CD8-positive, alpha-beta T cell (primary cell): ENCODE measurements at regions of chr7 and their contacts with region 1.

Region 1: DNA sequence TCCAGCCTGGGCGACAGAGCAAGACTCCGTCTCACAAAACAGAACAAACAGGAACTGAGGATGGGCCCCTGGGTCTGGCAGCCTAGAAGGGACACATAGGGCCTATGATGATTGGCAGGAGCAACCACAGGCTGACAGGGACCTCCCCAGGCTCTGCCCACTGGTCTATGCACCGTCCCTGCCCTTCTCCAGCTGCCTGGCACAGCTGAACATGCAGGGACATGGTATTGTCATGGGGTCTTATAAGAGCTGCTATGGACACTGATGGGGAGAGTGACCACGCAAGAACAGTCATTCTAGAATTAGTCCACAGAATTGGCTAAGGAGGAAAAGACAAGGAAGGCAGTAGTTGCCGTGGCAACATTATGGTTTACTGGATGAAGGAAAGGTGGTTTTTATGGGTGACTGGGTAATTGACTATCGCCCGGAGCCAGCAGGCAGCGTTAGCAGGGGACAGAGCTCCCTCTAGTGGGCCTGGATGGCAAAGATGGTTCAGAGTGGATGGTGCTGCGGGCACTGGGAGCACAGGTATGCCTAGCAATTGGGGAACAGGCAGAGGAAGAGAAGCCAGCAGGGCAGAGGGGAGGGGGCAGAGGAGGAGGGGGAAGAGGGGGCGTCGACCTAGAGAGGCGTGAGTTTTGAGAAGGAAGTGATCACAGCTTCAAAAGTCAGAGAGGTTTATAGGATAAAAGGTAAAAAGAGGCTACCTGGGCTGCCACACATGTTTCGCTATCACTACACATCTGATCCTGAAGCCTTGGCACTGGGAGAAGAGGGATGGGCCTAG is 7.8 kb upstream of the TRIM56 start:
- DNase-seq: peak; percentile 75 to 86 (median 83)
- ATAC-seq: peak; percentile 98
- H3K4me3 ChIP-seq: no peak overlapping the region
- H3K4me3 Mint-ChIP-seq: no peak overlapping the region
- H3K27ac ChIP-seq: no peak overlapping the region
- H3K27ac Mint-ChIP-seq: no peak overlapping the region
- H3K4me1 ChIP-seq: no peaks in the 10 kb centered on the region
- H3K4me1 Mint-ChIP-seq: peaks cover 8% of the 10 kb centered on the region
- H3K27me3 ChIP-seq: no peaks in the 10 kb centered on the region
- H3K27me3 Mint-ChIP-seq: peaks cover 5% of the 10 kb centered on the region
- CTCF ChIP-seq: peak; percentile 80

Region 2: DNA sequence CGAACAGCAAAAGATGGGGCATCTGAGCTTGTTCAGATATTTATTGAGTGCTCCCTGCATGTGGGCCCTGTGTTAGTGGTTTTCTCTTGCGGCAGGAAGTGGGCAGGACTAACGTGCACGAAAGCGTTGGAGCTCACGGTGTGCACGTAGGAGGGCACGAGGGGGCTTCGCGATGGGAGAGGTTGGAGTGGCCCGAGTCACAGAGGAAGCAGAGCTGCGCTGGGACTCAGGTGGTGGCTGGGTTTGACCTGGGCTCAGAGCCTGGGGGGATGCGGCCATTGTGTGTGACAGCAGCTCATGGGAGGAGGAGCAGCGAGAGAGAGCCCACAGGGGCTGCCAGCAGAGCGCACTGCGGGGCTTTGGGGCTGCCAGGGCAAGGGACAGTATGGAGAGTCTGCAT is 1453.0 kb before region 1 on chr7:
- CTCF ChIA-PET with region 1: no interaction called
- POLR2A ChIA-PET with region 1: no interaction called
- intact Hi-C with region 1: loop called in 1 of 2 experiments (anchors 5 kb)
- DNase-seq: peak; percentile 57 to 96 (median 78)
- ATAC-seq: peak; percentile 92
- H3K4me3 ChIP-seq: peak overlapping the region; percentile 33 to 51
- H3K4me3 Mint-ChIP-seq: peak overlapping the region; percentile 90
- H3K27ac ChIP-seq: peak overlapping the region; percentile 71 to 87
- H3K27ac Mint-ChIP-seq: peak overlapping the region; percentile 99
- H3K4me1 ChIP-seq: peaks cover 36% of the 10 kb centered on the region
- H3K4me1 Mint-ChIP-seq: peaks cover 60% of the 10 kb centered on the region
- H3K27me3 ChIP-seq: no peaks in the 10 kb centered on the region
- H3K27me3 Mint-ChIP-seq: no peaks in the 10 kb centered on the region
- CTCF ChIP-seq: no peak

Region 3: GRCh38 chr7:100896732-100897608 is 180.5 kb before region 1 on chr7:
- CTCF ChIA-PET with region 1: interaction called, 8 read pairs
- POLR2A ChIA-PET with region 1: no interaction called
- intact Hi-C with region 1: loop called (anchors 1 to 2 kb)
- DNase-seq: peak in 7 of 9 experiments; percentile 54 to 71 (median 58)
- ATAC-seq: peak; percentile 57
- H3K4me3 ChIP-seq: no peak overlapping the region
- H3K4me3 Mint-ChIP-seq: peak overlapping the region; percentile 78
- H3K27ac ChIP-seq: no peak overlapping the region
- H3K27ac Mint-ChIP-seq: no peak overlapping the region
- H3K4me1 ChIP-seq: peaks cover 8% of the 10 kb centered on the region
- H3K4me1 Mint-ChIP-seq: peaks cover 8% of the 10 kb centered on the region
- H3K27me3 ChIP-seq: peaks cover 8 to 30% of the 10 kb centered on the region in 2 experiments
- H3K27me3 Mint-ChIP-seq: peaks cover 36% of the 10 kb centered on the region
- CTCF ChIP-seq: peak; percentile 68

Region 4: DNA sequence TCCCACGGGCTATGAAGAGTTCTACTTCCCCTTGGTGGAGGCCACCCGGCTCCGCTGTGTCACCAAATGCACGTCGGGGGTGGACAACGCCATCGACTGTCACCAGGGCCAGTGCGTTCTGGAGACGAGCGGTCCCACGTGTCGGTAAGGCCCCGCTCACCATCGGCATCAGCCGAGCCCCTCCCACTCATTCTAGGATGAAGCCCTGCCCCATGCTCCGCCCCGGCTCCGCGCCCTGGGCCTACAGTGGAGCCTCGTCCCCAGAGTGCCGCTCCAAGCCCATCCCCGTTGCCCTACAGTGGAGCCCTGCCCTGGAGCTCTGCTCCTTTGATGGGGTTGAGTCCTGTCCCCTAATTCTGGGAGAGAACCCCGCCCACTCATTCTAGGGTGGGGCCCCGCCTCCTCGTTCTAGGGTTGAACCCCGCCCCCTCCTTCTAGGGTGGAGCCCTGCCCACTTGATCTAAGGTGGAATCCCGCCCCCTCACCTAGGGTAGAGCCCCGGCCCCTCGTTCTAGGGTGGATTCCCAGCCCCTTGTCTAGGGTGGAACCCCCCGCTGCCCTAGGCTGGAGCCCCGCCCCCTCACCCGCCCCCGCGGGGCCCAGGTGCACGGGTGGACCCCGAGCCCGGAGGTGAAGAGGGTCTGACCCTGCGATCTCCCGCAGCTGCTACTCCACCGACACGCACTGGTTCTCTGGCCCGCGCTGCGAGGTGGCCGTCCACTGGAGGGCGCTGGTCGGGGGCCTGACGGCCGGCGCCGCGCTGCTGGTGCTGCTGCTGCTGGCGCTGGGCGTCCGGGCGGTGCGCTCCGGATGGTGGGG is 111.6 kb before region 1 on chr7:
- CTCF ChIA-PET with region 1: interaction called, 3 read pairs
- POLR2A ChIA-PET with region 1: no interaction called
- intact Hi-C with region 1: loop called (anchors 5 kb)
- DNase-seq: peak; percentile 57 to 84 (median 71)
- ATAC-seq: peak; percentile 84
- H3K4me3 ChIP-seq: peak overlapping the region; percentile 35 to 71
- H3K4me3 Mint-ChIP-seq: peak overlapping the region; percentile 81
- H3K27ac ChIP-seq: no peak overlapping the region
- H3K27ac Mint-ChIP-seq: no peak overlapping the region
- H3K4me1 ChIP-seq: peaks cover 21% of the 10 kb centered on the region
- H3K4me1 Mint-ChIP-seq: peaks cover 24% of the 10 kb centered on the region
- H3K27me3 ChIP-seq: peaks cover 36 to 40% of the 10 kb centered on the region in 2 experiments
- H3K27me3 Mint-ChIP-seq: peaks cover 60% of the 10 kb centered on the region
- CTCF ChIP-seq: peak; percentile 56

Region 5: DNA sequence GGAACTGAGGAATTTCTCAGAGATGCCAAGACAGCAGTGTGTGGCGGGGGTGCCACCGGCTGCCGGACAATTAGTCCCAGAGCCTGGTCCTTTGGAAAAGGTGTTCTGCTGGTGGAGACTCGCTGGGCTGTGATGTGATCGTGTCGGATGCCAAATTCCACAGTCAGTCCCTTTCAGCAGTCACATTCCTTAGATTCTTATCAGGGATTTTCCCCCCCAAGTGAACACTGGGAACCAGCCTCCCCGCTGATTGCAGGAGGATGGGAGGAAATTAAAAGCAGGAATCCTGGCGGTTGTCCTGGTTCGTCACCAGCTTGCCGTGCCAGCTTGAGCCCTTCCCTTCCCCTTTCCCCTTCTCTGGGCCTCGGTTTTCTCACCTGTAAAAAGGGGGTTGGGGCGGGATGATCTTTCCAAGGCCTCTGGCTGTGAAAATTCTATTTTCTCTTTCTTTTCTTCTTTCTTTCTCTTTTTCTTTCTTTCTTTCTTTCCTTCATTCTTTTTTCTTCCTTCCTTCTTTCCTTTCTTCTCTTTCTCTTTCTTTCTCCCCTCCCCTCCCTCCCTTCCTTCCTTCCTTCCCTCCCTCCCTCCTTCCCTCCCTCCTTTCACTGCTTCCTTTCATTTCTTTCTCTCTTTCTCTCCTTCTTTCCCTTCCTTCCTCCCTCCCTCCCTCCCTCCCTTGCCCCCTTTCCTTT is 324.7 kb after region 1 on chr7:
- CTCF ChIA-PET with region 1: no interaction called
- POLR2A ChIA-PET with region 1: no interaction called
- intact Hi-C with region 1: no loop called
- DNase-seq: no peak
- ATAC-seq: no peak
- H3K4me3 ChIP-seq: no peak overlapping the region
- H3K4me3 Mint-ChIP-seq: no peak overlapping the region
- H3K27ac ChIP-seq: no peak overlapping the region
- H3K27ac Mint-ChIP-seq: no peak overlapping the region
- H3K4me1 ChIP-seq: no peaks in the 10 kb centered on the region
- H3K4me1 Mint-ChIP-seq: no peaks in the 10 kb centered on the region
- H3K27me3 ChIP-seq: no peaks in the 10 kb centered on the region
- H3K27me3 Mint-ChIP-seq: peaks cover 17% of the 10 kb centered on the region
- CTCF ChIP-seq: no peak

Region 6: DNA sequence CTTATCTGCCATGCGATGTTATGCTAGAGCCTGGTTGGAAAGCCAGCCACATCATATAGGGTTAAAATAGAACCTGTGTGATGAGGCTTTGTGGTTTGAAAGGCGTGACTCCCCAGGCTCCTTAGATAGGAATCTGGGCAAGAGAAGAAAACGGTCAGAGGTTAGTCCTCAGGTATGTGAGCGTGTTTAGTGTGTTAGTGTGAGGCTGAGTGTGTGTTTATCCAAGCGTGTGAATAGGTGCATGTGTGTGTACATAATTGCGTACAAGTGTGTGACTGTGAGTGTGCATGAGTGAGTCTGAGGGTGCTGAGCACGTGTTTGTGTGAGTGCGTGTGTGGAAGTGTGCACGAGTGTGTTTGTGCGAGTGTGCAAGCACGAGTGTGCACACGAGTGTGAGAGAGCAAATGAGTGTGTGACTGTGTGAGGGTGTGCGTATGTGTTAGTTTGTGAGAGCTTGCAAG is 365.1 kb after region 1 on chr7:
- CTCF ChIA-PET with region 1: no interaction called
- POLR2A ChIA-PET with region 1: no interaction called
- intact Hi-C with region 1: no loop called
- DNase-seq: no peak
- ATAC-seq: no peak
- H3K4me3 ChIP-seq: no peak overlapping the region
- H3K4me3 Mint-ChIP-seq: no peak overlapping the region
- H3K27ac ChIP-seq: no peak overlapping the region
- H3K27ac Mint-ChIP-seq: no peak overlapping the region
- H3K4me1 ChIP-seq: no peaks in the 10 kb centered on the region
- H3K4me1 Mint-ChIP-seq: peaks cover 3% of the 10 kb centered on the region
- H3K27me3 ChIP-seq: no peaks in the 10 kb centered on the region
- H3K27me3 Mint-ChIP-seq: peaks cover 9% of the 10 kb centered on the region
- CTCF ChIP-seq: no peak